Left ventricle myocardium superior (tissue), 1 donor: ENCODE measurements at regions of chr7 and their contacts with region 1.

Region 1: GRCh38 chr7:73811760-73812168 is 19.0 kb upstream of the CLDN4 start:
- DNase-seq: peak; percentile 78
- ATAC-seq: peak; percentile 84

Region 2: GRCh38 chr7:71854546-71855397 is 1957.0 kb before region 1 on chr7:
- intact Hi-C with region 1: loop called (anchors 10 kb)
- DNase-seq: no peak
- ATAC-seq: no peak

Region 3: GRCh38 chr7:73681031-73681430 is 130.7 kb before region 1 on chr7:
- intact Hi-C with region 1: no loop called
- DNase-seq: no peak
- ATAC-seq: no peak